Activated naive CD4-positive, alpha-beta T cell treated with anti-CD3 and anti-CD28 coated beads for 36 hours (primary cell): ENCODE measurements at regions of chr1 and their contacts with region 1.

Region 1: GRCh38 chr1:95043141-95043980 is 29.4 kb downstream of the ALG14 start:
- DNase-seq: peak; percentile 87
- H3K4me3 Mint-ChIP-seq: no peak overlapping the region
- H3K27ac Mint-ChIP-seq: no peak overlapping the region
- H3K4me1 Mint-ChIP-seq: no peaks in the 10 kb centered on the region
- H3K27me3 Mint-ChIP-seq: no peaks in the 10 kb centered on the region

Region 2: DNA sequence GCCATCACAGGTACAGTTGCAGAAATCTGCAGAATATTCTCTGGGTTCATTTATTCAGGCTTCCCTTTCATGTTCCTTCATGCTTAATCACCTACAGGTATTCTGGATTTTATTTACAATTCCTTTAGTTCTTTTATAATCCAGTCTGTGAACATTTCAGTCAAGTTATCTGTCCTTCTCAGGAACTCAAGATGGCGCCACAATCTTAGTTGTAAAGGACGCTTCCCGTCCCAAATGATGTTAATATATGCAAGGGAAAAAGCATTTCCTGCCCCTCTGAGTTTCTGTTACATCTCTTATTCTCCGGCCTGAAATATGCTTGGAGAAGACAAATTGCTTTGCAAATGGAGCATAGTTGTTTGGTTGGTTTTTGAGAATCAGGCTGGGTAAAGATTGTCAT is 521.1 kb before region 1 on chr1:
- CTCF ChIA-PET with region 1: no interaction called
- intact Hi-C with region 1: loop called (anchors 2 kb)
- DNase-seq: peak; percentile 14
- H3K4me3 Mint-ChIP-seq: no peak overlapping the region
- H3K27ac Mint-ChIP-seq: no peak overlapping the region
- H3K4me1 Mint-ChIP-seq: no peaks in the 10 kb centered on the region
- H3K27me3 Mint-ChIP-seq: no peaks in the 10 kb centered on the region

Region 3: DNA sequence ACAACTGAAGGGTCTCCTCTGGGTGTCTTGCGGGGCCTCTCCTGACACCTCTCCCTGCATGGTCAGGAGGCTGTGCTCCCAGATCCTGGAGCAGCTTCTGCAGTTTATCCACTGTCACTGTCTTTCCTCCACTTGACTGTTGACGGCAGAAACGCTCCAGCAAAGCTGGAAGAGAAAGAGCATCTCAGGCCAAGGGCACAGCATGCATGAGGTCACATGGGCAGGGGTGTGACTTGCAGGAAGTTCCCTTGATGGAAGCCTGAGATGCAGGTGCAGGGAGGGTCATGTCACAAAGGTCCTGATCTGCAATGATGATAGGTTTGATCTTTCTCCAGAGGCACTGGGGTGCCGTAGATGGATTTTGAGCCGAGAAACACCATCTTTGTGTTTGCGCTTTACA is 199.9 kb before region 1 on chr1:
- CTCF ChIA-PET with region 1: interaction called, 11 read pairs
- intact Hi-C with region 1: no loop called
- DNase-seq: no peak
- H3K4me3 Mint-ChIP-seq: no peak overlapping the region
- H3K27ac Mint-ChIP-seq: no peak overlapping the region
- H3K4me1 Mint-ChIP-seq: no peaks in the 10 kb centered on the region
- H3K27me3 Mint-ChIP-seq: peaks cover 3% of the 10 kb centered on the region

Region 4: DNA sequence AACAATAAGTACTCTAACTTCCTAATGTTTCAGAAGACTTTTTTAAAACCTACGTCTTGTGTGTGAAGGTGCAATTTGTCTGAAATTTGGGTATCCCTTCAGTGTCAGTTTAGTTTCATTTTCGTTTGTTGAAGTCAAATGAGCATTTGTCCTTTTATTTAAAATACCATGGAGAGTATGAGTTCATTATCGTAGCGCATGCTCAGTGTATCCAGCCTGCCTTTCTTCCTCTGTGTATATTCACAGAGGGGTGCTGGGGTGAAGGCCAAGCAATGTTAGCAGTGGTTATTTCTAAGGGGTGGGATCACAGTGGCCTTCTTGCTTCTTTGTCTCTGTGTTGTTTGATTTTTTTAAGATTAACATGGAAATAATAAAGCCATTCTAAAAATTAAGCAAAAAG is 159.7 kb before region 1 on chr1:
- CTCF ChIA-PET with region 1: interaction called, 4 read pairs
- intact Hi-C with region 1: loop called (anchors 1 kb)
- DNase-seq: peak; percentile 35
- H3K4me3 Mint-ChIP-seq: peak overlapping the region; percentile 44
- H3K27ac Mint-ChIP-seq: peak overlapping the region; percentile 65
- H3K4me1 Mint-ChIP-seq: peaks cover 12% of the 10 kb centered on the region
- H3K27me3 Mint-ChIP-seq: no peaks in the 10 kb centered on the region

Region 5: GRCh38 chr1:94962409-94963265 is 80.7 kb before region 1 on chr1:
- CTCF ChIA-PET with region 1: interaction called, 3 read pairs
- intact Hi-C with region 1: loop called (anchors 5 kb)
- DNase-seq: peak; percentile 48
- H3K4me3 Mint-ChIP-seq: peak overlapping the region; percentile 84
- H3K27ac Mint-ChIP-seq: peak overlapping the region; percentile 84
- H3K4me1 Mint-ChIP-seq: peaks cover 8% of the 10 kb centered on the region
- H3K27me3 Mint-ChIP-seq: no peaks in the 10 kb centered on the region